Panc1 (cell line): ENCODE measurements at regions of chr2 and their contacts with region 1.

Region 1: GRCh38 chr2:135694711-135695110 is 46.9 kb upstream of the UBXN4 start:
- DNase-seq: no peak
- ATAC-seq: no peak
- H3K4me3 ChIP-seq: no peak overlapping the region
- H3K27ac ChIP-seq: no peak overlapping the region
- H3K4me1 ChIP-seq: no peaks in the 10 kb centered on the region
- H3K27me3 ChIP-seq: no peaks in the 10 kb centered on the region
- CTCF ChIP-seq: no peak

Region 2: GRCh38 chr2:135657806-135658582 is 36.7 kb before region 1 on chr2:
- CTCF ChIA-PET with region 1: no interaction called
- POLR2A ChIA-PET with region 1: no interaction called
- in situ Hi-C with region 1: no loop called
- intact Hi-C with region 1: no loop called
- DNase-seq: no peak
- ATAC-seq: no peak
- H3K4me3 ChIP-seq: no peak overlapping the region
- H3K27ac ChIP-seq: no peak overlapping the region
- H3K4me1 ChIP-seq: no peaks in the 10 kb centered on the region
- H3K27me3 ChIP-seq: no peaks in the 10 kb centered on the region
- CTCF ChIP-seq: no peak

Region 3: GRCh38 chr2:135709992-135710391 is 15.3 kb after region 1 on chr2:
- CTCF ChIA-PET with region 1: interaction called, 10 read pairs
- POLR2A ChIA-PET with region 1: no interaction called
- in situ Hi-C with region 1: no loop called
- intact Hi-C with region 1: no loop called
- DNase-seq: no peak
- ATAC-seq: peak; percentile 70
- H3K4me3 ChIP-seq: no peak overlapping the region
- H3K27ac ChIP-seq: no peak overlapping the region
- H3K4me1 ChIP-seq: no peaks in the 10 kb centered on the region
- H3K27me3 ChIP-seq: no peaks in the 10 kb centered on the region
- CTCF ChIP-seq: peak; percentile 95

Region 4: GRCh38 chr2:135745545-135745944 is 50.8 kb after region 1 on chr2:
- CTCF ChIA-PET with region 1: no interaction called
- POLR2A ChIA-PET with region 1: no interaction called
- in situ Hi-C with region 1: no loop called
- intact Hi-C with region 1: no loop called
- DNase-seq: no peak
- ATAC-seq: no peak
- H3K4me3 ChIP-seq: no peak overlapping the region
- H3K27ac ChIP-seq: no peak overlapping the region
- H3K4me1 ChIP-seq: peaks cover 16% of the 10 kb centered on the region
- H3K27me3 ChIP-seq: no peaks in the 10 kb centered on the region
- CTCF ChIP-seq: no peak

Region 5: DNA sequence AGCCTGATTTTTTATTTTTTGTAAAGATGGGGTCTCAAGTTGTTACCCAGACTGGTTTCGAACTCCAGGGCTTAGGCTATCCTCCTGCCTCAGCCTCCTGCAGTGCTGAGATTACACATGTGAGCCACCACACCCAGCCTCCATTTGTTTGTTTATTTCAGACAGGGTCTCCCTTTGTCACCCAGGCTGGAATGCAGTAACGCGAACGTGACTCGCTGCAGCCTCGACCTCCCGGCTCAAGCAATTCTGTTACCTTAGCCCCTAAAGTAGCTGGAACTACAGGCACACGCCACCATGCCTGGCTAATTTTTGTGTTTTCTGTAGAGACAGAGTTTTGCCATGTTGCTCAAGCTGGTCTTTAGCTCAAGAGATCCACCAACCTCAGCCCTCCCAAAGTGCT is 74.2 kb after region 1 on chr2:
- CTCF ChIA-PET with region 1: no interaction called
- POLR2A ChIA-PET with region 1: no interaction called
- in situ Hi-C with region 1: no loop called
- intact Hi-C with region 1: no loop called
- DNase-seq: no peak
- ATAC-seq: no peak
- H3K4me3 ChIP-seq: no peak overlapping the region
- H3K27ac ChIP-seq: no peak overlapping the region
- H3K4me1 ChIP-seq: no peaks in the 10 kb centered on the region
- H3K27me3 ChIP-seq: no peaks in the 10 kb centered on the region
- CTCF ChIP-seq: no peak